Posterior cingulate gyrus (tissue), 11 donors: ENCODE measurements at regions of chr2 and their contacts with region 1.

Region 1: DNA sequence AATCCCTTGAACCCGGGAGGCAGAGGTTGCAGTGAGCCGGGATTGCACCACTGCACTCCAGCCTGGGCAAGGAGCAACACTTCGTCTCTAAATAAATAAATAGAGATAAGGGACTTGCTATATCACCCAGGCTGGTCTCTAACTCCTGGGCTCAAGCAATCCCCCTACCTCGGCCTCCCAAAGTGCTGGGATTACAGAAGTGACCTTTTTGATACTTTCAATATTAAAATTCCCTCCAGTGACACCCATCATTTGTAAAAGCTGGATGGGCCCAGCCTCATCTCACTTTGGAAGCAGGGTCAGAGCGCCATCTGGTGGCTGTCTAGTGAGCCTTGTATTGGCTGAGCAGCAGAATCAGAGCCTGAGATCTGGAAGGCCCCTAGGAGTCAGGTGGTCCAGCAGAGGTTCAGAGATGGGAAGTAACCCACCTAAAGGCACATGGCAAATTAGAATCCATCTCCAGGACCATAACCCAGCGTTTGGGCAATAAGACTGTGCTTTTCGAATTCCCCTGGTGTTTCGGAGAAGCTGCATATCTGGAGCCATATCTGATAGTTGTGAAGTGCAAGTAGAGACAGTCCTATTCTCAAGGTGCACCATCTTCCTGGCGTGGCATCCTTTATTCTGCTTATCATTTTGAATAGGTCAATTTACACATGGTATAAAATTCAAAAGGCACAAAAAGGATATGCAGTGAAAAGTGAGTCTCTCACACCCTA is 18.3 kb upstream of the SLC35F6 start:
- DNase-seq: peak; percentile 69 to 97 (median 92)

Region 2: DNA sequence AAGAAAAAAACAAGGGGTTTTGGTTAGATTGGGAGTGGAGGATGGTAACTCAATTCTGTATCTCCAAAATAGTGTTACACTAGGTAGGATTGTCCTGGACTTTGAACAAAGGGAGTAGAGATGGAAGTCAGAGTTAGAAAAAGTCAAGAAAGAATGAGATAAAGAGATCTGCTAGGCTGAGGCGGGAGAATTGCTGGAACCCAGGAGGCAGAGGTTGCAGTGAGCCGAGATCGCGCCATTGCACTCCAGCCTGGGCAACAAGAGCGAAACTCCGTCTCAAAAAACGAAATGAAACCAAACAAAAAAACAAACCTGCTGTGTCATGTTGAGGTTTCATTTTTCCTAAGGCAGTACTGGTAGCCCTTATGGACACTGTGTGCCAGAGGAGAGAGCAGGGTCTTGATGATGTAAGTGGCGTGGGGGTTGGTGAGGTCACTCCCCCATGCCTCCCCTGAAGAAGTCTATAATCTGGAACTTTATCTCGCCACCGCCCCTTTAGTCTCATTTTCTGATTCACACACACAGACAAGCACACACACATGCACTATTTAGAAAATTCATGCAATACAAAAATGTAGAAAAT is 333.6 kb before region 1 on chr2:
- intact Hi-C with region 1: no loop called
- DNase-seq: no peak

Region 3: GRCh38 chr2:26605195-26605998 is 140.4 kb before region 1 on chr2:
- intact Hi-C with region 1: loop called (anchors 1 kb)
- DNase-seq: peak in 3 of 10 donors; percentile 32 to 46 (median 45)